Stomach (tissue), 19 donors: ENCODE measurements at regions of chr5 and their contacts with region 1.

Region 1: DNA sequence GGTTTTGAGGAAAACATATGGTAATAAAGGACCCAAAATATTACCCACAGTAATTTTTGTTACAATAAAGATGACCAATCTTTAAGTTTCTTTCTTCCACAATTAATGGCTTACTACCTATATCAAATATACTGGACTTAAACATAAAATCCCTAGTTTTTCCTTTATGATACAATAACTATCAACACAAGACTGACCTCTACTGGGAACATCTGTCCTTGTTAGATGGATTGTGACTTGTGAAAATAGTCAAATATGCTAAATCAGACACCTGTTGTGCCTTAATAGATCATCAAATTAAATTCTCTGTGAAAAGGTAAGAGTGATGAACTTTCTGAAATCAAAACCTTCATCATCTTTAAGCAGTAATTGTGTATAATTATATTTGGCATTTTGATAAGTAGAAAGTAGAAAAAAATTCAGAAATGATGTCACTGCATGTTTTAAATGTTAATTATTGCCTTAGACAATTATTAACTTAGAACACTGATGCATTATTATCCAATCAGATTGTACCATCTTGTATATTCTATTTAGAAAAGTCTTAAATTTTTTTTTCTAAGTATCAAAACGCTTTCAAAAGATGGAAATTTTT is 113.6 kb downstream of the DEPDC1B start:
- DNase-seq: peak in 1 of 2 donors; percentile 64
- H3K4me3 ChIP-seq: no peak overlapping the region
- H3K27ac ChIP-seq: no peak overlapping the region
- H3K4me1 ChIP-seq: peaks cover 6 to 13% (median 10%) of the 10 kb centered on the region in 4 donors
- H3K27me3 ChIP-seq: no peaks in the 10 kb centered on the region
- CTCF ChIP-seq: peak in 3 of 7 experiments; percentile 5 to 56 (median 36)
- EP300 ChIP-seq: no peak
- POLR2A ChIP-seq: no peak

Region 2: GRCh38 chr5:59810041-59810440 is 776.4 kb before region 1 on chr5:
- intact Hi-C with region 1: loop called (anchors 10 kb)
- DNase-seq: peak; percentile 76 to 92
- H3K4me3 ChIP-seq: peak overlapping the region in 1 of 4 donors; percentile 16
- H3K27ac ChIP-seq: no peak overlapping the region
- H3K4me1 ChIP-seq: peaks cover 0 to 27% (median 13%) of the 10 kb centered on the region in 4 donors
- H3K27me3 ChIP-seq: no peaks in the 10 kb centered on the region
- CTCF ChIP-seq: peak in 5 of 7 experiments; percentile 60 to 90 (median 87)
- EP300 ChIP-seq: no peak
- POLR2A ChIP-seq: no peak

Region 3: GRCh38 chr5:60463179-60463868 is 123.1 kb before region 1 on chr5:
- intact Hi-C with region 1: no loop called
- DNase-seq: no peak
- H3K4me3 ChIP-seq: no peak overlapping the region
- H3K27ac ChIP-seq: no peak overlapping the region
- H3K4me1 ChIP-seq: no peaks in the 10 kb centered on the region
- H3K27me3 ChIP-seq: no peaks in the 10 kb centered on the region
- CTCF ChIP-seq: no peak
- EP300 ChIP-seq: no peak
- POLR2A ChIP-seq: no peak